ENCODE measurements at regions of chr7 and their contacts with region 1.

Region 1: DNA sequence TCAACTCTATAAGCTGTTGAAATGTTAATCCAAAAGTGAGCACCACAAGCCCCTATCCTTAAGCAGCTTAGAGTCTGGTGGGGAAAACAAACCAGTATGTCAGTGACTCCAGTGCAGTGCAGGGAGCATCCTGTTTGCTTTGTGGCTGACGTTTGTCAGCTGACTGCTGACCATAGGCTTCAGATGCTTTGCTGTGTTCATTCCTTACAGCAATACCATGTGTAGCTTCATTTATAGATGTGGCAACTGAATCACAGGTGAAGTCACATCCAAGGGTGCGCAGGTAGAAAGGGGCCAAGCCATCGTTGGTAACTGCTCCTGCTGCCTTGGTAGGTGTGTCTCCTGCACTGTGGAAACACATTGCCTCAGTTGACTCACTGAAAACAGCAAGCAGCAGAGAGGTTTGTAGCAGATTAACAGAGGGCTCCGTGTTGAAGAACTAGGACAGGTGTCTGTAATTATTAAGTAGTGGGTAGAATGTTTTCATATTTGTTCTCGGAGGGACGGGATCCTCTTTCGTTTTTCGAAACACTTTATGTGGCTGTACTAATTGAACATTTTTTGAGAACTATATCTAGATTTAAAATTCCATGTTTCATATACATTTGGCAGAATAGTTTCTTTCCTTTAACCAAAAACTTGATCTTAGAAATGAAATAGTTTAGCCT is 2.0 kb downstream of the INSIG1 start:
- DNase-seq: no peak
- H3K4me3 ChIP-seq: peak overlapping the region; percentile 85 to 91 (median 88)
- H3K27ac ChIP-seq: peak overlapping the region; percentile 93 to 96
- H3K4me1 ChIP-seq: peaks cover 0 to 11% of the 10 kb centered on the region in 2 donors
- H3K27me3 ChIP-seq: no peaks in the 10 kb centered on the region
- CTCF ChIP-seq: no peak
- POLR2A ChIP-seq: no peak

Region 2: DNA sequence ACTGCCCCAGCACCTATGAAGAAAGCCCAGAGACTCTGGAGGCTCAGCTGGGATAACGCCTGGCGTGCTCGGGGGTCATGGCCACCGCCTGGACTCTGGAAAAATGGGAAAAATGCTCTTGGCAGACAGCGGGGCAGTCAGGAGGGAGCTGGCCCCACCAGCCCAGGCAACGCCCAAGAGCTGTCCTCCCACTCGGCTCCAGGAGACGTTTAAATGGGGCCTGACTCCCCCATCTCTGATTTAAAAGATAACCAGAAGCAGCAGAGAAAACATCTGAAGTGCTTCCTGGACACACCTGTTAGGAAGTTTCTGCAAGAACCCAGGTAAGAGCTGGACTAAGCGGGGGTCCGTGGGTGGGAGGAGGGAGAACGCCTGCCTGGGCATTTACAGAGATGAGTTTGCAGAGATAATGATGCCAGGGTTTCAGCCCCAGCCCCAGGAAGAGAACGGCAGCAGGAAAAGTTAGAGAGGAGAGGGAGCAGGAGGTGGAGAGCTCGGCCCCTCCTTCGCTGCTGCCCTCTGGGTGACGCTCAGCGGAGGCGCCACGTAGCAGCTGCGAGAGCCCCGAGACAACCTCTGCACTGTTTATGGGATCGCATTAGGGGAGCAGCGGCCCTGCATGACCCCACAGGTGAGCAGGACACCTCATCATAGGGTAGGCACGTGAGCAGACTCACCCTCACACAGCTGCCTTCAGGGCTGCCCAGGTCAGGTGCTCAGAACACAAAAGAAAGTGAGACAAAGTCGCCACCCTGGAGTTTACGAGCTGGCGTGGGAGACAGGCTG is 85.5 kb before region 1 on chr7:
- intact Hi-C with region 1: loop called (anchors 5 kb)
- DNase-seq: peak; percentile 28 to 31
- H3K4me3 ChIP-seq: peak overlapping the region; percentile 42 to 59 (median 50)
- H3K27ac ChIP-seq: peak overlapping the region; percentile 33 to 75
- H3K4me1 ChIP-seq: no peaks in the 10 kb centered on the region
- H3K27me3 ChIP-seq: peaks cover 0 to 12% of the 10 kb centered on the region in 2 donors
- CTCF ChIP-seq: no peak
- POLR2A ChIP-seq: no peak

Measured in breast epithelium (tissue), 4 donors.